ENCODE measurements at regions of chr9 and their contacts with region 1.

Region 1: GRCh38 chr9:71604197-71605063 is 163.9 kb downstream of the CEMIP2 start:
- DNase-seq: peak; percentile 66
- ATAC-seq: peak; percentile 74
- H3K4me3 ChIP-seq: no peak overlapping the region
- H3K27ac ChIP-seq: no peak overlapping the region
- H3K4me1 ChIP-seq: no peaks in the 10 kb centered on the region
- H3K27me3 ChIP-seq: no peaks in the 10 kb centered on the region
- CTCF ChIP-seq: peak; percentile 86

Region 2: GRCh38 chr9:71624728-71625127 is 20.3 kb after region 1 on chr9:
- CTCF ChIA-PET with region 1: no interaction called
- POLR2A ChIA-PET with region 1: no interaction called
- intact Hi-C with region 1: loop called (anchors 2 kb)
- DNase-seq: no peak
- ATAC-seq: no peak
- H3K4me3 ChIP-seq: no peak overlapping the region
- H3K27ac ChIP-seq: no peak overlapping the region
- H3K4me1 ChIP-seq: peaks cover 22% of the 10 kb centered on the region
- H3K27me3 ChIP-seq: no peaks in the 10 kb centered on the region
- CTCF ChIP-seq: peak; percentile 28; the same call in 1 of the 2 replicates

Region 3: GRCh38 chr9:71634734-71635133 is 30.3 kb after region 1 on chr9:
- CTCF ChIA-PET with region 1: no interaction called
- POLR2A ChIA-PET with region 1: no interaction called
- intact Hi-C with region 1: loop called (anchors 1 kb)
- DNase-seq: peak; percentile 14
- ATAC-seq: no peak
- H3K4me3 ChIP-seq: no peak overlapping the region
- H3K27ac ChIP-seq: no peak overlapping the region
- H3K4me1 ChIP-seq: no peaks in the 10 kb centered on the region
- H3K27me3 ChIP-seq: no peaks in the 10 kb centered on the region
- CTCF ChIP-seq: peak; percentile 27; the same call in 1 of the 2 replicates

Region 4: GRCh38 chr9:71683598-71684235 is 79.3 kb after region 1 on chr9:
- CTCF ChIA-PET with region 1: no interaction called
- POLR2A ChIA-PET with region 1: no interaction called
- intact Hi-C with region 1: loop called (anchors 5 kb)
- DNase-seq: peak; percentile 46
- ATAC-seq: peak; percentile 15; the same call in 1 of the 2 replicates
- H3K4me3 ChIP-seq: no peak overlapping the region
- H3K27ac ChIP-seq: no peak overlapping the region
- H3K4me1 ChIP-seq: peaks cover 69% of the 10 kb centered on the region
- H3K27me3 ChIP-seq: no peaks in the 10 kb centered on the region
- CTCF ChIP-seq: peak; percentile 47

Region 5: GRCh38 chr9:71716138-71716909 is 111.9 kb after region 1 on chr9:
- CTCF ChIA-PET with region 1: no interaction called
- POLR2A ChIA-PET with region 1: no interaction called
- intact Hi-C with region 1: loop called (anchors 5 kb)
- DNase-seq: peak; percentile 21
- ATAC-seq: no peak
- H3K4me3 ChIP-seq: no peak overlapping the region
- H3K27ac ChIP-seq: no peak overlapping the region
- H3K4me1 ChIP-seq: no peaks in the 10 kb centered on the region
- H3K27me3 ChIP-seq: no peaks in the 10 kb centered on the region
- CTCF ChIP-seq: peak; percentile 69; the same call in 1 of the 2 replicates

Region 6: DNA sequence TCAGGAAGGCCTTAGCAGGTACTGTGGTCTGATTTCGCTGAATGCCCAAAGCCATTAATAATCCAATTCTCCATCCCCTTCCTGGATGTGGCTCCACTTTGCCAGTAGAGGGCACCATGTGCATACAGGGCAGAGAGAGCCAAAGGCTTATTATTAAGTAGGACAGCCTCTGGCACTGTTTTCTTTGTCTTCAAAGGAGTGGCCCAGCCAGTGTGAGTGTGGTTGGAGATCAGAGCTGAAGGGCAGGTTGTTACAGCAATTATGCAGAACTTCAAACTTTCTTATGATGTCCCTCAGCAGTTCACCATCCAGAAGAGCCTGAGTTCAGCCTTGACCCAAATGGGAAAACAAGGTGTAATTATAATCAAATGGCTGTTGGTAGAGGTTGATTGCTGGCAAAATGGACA is 202.5 kb after region 1 on chr9:
- CTCF ChIA-PET with region 1: no interaction called
- POLR2A ChIA-PET with region 1: no interaction called
- intact Hi-C with region 1: loop called (anchors 5 kb)
- DNase-seq: peak; percentile 81
- ATAC-seq: peak; percentile 99
- H3K4me3 ChIP-seq: no peak overlapping the region
- H3K27ac ChIP-seq: no peak overlapping the region
- H3K4me1 ChIP-seq: no peaks in the 10 kb centered on the region; the same call in 1 of the 2 replicates
- H3K27me3 ChIP-seq: no peaks in the 10 kb centered on the region
- CTCF ChIP-seq: peak; percentile 89